MCF 10A (cell line): ENCODE measurements at regions of chr4 and their contacts with region 1.

Region 1: GRCh38 chr4:112321776-112322684 is 24.9 kb downstream of the ALPK1 start:
- DNase-seq: peak; percentile 73
- H3K4me3 Mint-ChIP-seq: no peak overlapping the region
- H3K27ac Mint-ChIP-seq: no peak overlapping the region
- H3K4me1 Mint-ChIP-seq: peaks cover 6% of the 10 kb centered on the region
- H3K27me3 Mint-ChIP-seq: no peaks in the 10 kb centered on the region
- CTCF ChIP-seq: peak; percentile 87

Region 2: GRCh38 chr4:112284662-112285411 is 37.2 kb before region 1 on chr4:
- CTCF ChIA-PET with region 1: interaction called, 3 read pairs
- POLR2A ChIA-PET with region 1: interaction called, 10 read pairs
- intact Hi-C with region 1: no loop called
- DNase-seq: peak; percentile 42
- H3K4me3 Mint-ChIP-seq: peak overlapping the region; percentile 81
- H3K27ac Mint-ChIP-seq: peak overlapping the region; percentile 88
- H3K4me1 Mint-ChIP-seq: peaks cover 21% of the 10 kb centered on the region
- H3K27me3 Mint-ChIP-seq: no peaks in the 10 kb centered on the region
- CTCF ChIP-seq: no peak

Region 3: GRCh38 chr4:112296949-112297880 is 24.8 kb before region 1 on chr4 and contains the start of gene ALPK1:
- CTCF ChIA-PET with region 1: interaction called, 24 read pairs
- POLR2A ChIA-PET with region 1: interaction called, 4 read pairs
- intact Hi-C with region 1: loop called (anchors 1 kb)
- DNase-seq: peak; percentile 92
- H3K4me3 Mint-ChIP-seq: peak within 1 kb of the TSS; percentile 72
- H3K27ac Mint-ChIP-seq: peak within 1 kb of the TSS; percentile 91
- H3K4me1 Mint-ChIP-seq: no peaks in the 10 kb centered on the region
- H3K27me3 Mint-ChIP-seq: no peaks in the 10 kb centered on the region
- CTCF ChIP-seq: no peak
- total RNA-seq, gene ALPK1: 20.3 and 41.0 TPM in 2 replicates

Region 4: DNA sequence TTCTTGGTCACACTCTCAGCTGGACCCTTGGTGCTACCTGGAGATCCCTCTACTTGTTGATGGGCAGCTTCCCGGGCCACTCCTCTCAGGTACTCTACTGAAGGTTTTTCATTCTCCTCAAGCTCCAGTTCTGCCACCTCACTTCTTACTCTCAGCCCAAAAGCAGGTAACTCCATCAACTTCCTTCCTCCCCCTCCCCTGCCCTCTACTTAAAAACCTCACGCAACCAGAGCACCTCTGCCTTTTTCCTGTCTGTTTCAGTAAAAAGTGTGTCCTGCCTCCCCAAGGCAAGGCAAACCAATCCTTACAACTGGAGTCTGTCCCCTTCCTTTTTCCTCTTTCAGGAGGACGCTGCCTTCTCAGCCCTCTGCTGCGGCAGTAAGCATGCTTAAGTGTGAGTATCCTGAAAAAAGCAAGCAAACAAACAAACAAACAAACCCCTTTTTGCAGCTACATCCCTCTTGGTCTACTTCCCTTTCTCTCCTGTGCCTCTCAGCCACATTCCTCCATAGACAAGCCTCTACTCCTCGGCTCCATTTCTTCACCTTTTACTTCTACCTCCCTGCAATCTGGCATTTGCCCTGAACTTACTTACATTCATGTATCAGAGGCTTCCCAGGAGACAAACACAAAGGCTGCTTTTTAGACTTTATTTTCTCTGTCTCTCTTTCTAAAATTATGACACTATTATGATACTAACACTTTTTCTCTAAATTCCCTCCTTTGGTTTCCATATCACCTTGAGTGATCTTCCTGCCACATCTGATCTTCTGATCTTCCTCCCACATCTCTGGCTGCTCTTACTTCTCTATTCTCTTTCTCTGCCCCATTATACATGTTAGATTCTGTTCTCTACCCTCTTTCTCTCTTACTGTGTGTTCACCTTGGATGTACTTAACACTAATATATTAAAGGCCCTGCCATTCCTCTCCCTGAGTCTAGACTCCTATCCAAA is 19.4 kb before region 1 on chr4:
- CTCF ChIA-PET with region 1: interaction called, 24 read pairs
- POLR2A ChIA-PET with region 1: interaction called, 4 read pairs
- intact Hi-C with region 1: loop called (anchors 1 kb)
- DNase-seq: no peak
- H3K4me3 Mint-ChIP-seq: no peak overlapping the region
- H3K27ac Mint-ChIP-seq: no peak overlapping the region
- H3K4me1 Mint-ChIP-seq: no peaks in the 10 kb centered on the region
- H3K27me3 Mint-ChIP-seq: no peaks in the 10 kb centered on the region
- CTCF ChIP-seq: no peak

Region 5: DNA sequence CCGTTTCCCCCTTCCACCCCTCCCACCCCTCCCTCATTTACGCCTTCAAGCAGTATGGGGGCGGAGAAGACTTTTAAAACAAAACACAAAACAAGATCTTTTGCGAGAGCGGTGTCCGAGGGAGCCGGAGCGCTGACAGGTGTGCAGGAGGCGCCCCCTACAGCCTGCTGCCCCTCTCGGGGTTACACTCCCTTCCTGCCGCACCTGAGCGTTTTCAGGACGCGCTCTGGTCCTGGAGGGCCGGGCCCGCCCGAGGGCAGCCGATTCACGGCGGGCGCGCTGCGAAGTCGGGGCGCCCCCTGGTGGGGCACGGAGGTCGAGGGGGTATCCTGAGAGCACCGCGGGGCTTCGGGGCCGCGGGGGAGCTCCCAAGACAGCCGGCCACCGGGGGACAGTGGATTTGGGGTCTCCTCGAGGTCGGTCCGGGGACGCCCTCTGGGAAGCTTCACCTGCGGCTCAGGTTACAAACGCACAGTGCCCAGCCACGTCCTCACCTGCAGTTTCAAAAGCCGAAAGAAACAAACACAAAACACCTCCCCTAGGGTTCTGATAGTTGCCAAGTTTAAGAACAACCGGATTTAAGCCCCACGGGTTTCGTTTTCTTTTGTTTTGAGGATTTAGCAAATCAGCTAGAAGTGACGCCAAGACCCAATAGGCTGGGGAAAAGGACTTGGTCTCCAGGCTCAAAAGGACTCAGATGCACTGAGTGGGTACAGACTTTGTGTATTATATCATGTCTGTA is 201.9 kb after region 1 on chr4:
- CTCF ChIA-PET with region 1: interaction called, 77 read pairs
- POLR2A ChIA-PET with region 1: no interaction called
- intact Hi-C with region 1: loop called (anchors 2 kb)
- DNase-seq: peak; percentile 62
- H3K4me3 Mint-ChIP-seq: peak overlapping the region; percentile 69
- H3K27ac Mint-ChIP-seq: no peak overlapping the region
- H3K4me1 Mint-ChIP-seq: no peaks in the 10 kb centered on the region
- H3K27me3 Mint-ChIP-seq: peaks cover 20% of the 10 kb centered on the region
- CTCF ChIP-seq: peak; percentile 87